ENCODE measurements at regions of chrX and their contacts with region 1.

Region 1: DNA sequence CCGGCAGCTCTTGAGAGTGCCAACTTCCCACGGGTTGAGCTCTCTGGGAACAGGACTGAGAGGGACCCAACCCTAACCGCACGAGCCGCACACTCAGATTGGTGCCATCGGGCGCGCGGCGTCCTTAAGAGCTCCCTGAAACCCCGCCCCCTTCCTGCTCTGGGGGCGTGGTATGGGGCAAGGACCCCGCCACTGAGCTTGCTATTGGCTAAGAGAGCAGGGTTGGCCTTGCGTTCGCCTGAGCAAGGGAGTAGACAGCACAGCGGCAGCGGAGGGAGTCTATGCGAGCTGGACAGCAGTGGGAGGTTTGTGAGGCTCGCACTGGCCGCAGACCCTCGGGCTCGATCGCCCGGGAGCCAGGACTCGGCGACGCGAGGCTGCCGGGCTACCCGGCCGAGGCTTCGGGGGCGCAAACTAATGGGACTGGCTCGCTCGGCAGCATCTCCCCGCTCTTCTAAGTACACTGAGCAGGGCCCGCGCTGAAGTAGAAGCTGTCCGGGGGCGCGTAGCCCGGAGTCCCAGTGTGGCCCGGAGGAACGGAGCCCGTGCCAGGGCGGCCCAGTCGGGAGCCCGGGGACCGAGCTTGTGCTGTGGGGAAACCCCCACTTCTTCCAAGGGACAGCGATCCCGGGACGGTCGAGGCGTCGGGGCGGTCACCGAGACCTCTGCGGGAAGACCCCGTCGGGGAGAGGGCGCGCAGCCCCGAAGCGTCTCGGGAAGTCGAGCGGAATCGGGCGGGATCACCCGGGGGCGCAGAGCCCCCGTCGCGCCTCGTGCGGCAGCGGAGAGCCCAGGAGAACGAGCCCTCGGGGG is at the start of gene EFNB1:
- DNase-seq: peak; percentile 96 to 98
- H3K4me3 ChIP-seq: peak within 1 kb of the TSS; percentile 69 to 84
- H3K27ac ChIP-seq: peak within 1 kb of the TSS; percentile 89
- H3K4me1 ChIP-seq: peaks cover 17% of the 10 kb centered on the region
- H3K27me3 ChIP-seq: no peaks in the 10 kb centered on the region
- CTCF ChIP-seq: no peak
- POLR2A ChIP-seq: peak; percentile 34 to 88
- total RNA-seq, gene EFNB1: 43.0 TPM

Region 2: DNA sequence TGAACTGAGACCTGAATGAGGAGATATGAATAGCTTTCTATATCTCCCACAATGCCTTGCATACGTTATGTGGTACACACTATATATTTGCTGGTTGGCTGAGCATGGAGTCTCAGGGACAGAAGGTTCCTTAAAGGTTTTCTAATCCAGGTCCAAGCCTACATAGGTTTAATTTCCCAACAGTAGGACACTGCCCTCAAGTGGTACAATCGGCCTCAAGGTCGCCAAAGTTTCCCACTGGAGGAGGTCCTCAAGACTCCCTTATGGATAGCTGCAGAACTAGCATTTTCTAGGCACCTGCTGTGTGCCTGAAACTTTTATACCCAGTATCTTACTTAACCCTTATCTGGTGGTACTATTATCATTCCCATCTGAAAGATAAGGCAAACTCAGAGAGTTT is 21.1 kb before region 1 on chrX:
- intact Hi-C with region 1: no loop called
- DNase-seq: peak in 1 of 2 donors; percentile 49
- H3K4me3 ChIP-seq: no peak overlapping the region
- H3K27ac ChIP-seq: no peak overlapping the region
- H3K4me1 ChIP-seq: no peaks in the 10 kb centered on the region
- H3K27me3 ChIP-seq: no peaks in the 10 kb centered on the region
- CTCF ChIP-seq: peak in 1 of 3 experiments; percentile 9
- POLR2A ChIP-seq: no peak

Region 3: GRCh38 chrX:69060631-69061408 is 231.9 kb after region 1 on chrX:
- intact Hi-C with region 1: loop called (anchors 5 kb)
- DNase-seq: peak; percentile 55 to 83
- H3K4me3 ChIP-seq: no peak overlapping the region
- H3K27ac ChIP-seq: no peak overlapping the region
- H3K4me1 ChIP-seq: no peaks in the 10 kb centered on the region
- H3K27me3 ChIP-seq: no peaks in the 10 kb centered on the region
- CTCF ChIP-seq: peak in 1 of 3 experiments; percentile 30
- POLR2A ChIP-seq: no peak

Region 4: DNA sequence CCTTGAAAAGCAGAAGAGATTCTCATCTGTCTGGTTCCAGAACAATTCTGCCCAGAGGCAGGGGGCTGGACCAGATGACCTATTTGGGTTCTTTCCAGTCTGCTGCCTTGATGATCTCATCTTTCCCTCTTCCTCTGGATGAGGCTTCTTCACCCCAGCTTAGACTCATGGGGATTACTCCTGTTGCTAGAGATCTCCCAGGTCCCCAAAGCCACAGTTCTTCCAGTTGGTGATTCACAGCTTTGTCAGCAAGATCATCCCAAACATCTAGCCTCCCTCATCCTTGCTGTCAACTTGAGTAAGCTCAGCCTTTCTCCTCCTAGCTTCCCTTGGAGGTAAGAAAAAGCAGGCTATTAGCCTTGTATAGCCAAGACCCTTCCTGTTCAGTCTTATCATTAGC is 400.5 kb after region 1 on chrX:
- intact Hi-C with region 1: loop called (anchors 5 kb)
- DNase-seq: no peak
- H3K4me3 ChIP-seq: no peak overlapping the region
- H3K27ac ChIP-seq: no peak overlapping the region
- H3K4me1 ChIP-seq: no peaks in the 10 kb centered on the region
- H3K27me3 ChIP-seq: no peaks in the 10 kb centered on the region
- CTCF ChIP-seq: no peak
- POLR2A ChIP-seq: no peak

Region 5: DNA sequence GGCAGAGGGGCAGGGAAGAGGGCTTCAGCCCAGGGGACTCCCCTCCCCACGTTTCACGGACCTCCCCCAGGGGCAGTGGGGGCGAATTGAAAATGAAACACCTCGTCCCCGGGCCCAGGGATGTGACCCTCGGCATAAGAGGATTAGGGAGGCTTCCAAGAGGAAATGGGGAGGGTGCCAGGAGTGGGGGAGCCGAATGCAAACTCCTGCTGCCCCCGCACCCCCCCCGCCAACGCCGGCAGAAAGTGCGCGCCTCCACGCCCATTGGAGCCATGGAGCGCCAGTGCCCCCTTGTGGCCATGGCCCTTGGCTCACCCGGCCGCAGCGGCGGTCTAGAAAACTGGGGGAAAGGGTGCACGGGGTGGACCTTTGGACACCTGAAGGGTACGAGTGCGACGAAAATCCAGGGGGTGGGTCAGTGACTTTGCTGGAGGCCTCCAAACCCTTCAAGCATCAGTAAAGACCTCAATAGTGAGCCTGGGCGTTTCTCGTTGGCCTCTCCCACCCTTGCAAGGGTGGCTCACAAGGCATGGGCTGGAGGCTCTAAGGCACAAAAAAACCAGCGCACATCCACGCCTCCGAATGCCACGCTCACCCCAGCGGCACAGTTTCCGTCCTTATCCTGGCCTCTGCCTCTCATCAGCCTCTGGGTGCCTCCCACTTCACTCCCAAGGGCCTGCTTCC is 457.1 kb after region 1 on chrX:
- intact Hi-C with region 1: loop called (anchors 5 kb)
- DNase-seq: no peak
- H3K4me3 ChIP-seq: peak overlapping the region; percentile 39 to 48
- H3K27ac ChIP-seq: peak overlapping the region; percentile 74
- H3K4me1 ChIP-seq: no peaks in the 10 kb centered on the region
- H3K27me3 ChIP-seq: no peaks in the 10 kb centered on the region
- CTCF ChIP-seq: peak; percentile 66 to 85 (median 82)
- POLR2A ChIP-seq: no peak